ENCODE measurements at regions of chr7 and their contacts with region 1.

Region 1: DNA sequence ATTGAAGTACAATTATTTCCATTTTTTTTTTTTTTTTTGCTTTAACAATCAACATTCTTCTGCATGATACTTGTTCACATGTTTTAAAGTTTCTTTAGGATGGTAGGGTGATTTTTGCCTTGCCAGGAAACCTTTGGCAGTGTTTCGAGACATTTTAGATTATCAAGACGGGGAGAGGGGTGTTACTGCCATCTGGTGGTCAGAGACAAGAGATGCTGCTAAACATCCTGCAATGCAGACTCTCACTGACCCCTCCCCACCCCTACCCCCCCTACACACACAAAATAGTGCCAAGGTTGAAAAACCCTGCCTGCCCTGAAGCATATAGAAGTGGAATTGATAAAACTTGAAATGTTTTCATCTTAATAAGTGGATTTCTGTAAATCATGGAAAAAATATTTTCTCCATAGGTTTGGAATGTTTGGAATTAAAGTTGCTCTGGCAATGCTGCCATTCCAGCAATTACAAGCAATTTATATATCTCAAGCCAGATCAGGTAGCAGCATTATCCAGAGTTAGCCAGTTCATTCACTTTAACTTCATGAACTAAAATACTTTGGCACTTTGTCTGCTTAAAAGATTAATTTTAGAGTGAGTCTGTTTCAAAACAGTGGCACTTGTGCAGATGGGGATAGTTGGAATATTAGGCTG is 62.1 kb downstream of the SDHAF3 start:
- DNase-seq: peak; percentile 29
- H3K4me3 ChIP-seq: no peak overlapping the region
- H3K27ac ChIP-seq: no peak overlapping the region
- H3K27me3 ChIP-seq: no peaks in the 10 kb centered on the region
- CTCF ChIP-seq: peak; percentile 88

Region 2: DNA sequence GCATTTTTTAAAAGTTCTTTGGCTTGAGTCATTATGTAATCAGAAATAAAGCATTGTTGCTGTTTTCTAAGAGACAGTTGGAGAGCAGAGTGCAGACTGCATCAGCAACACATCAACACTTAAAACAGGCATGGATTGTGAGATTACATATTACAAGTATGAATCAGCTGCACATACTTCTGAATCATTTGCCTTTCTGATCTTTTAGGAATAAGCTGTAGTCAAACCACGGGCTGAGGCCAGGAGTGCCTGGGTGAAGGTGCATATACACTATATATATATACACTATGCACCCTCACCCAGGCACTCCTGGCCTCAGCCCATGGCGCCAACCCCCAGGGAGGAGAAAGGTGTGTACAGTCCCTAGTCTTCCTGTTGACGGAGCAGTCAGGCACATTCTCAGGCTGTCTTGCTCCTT is 226.6 kb before region 1 on chr7:
- CTCF ChIA-PET with region 1: no interaction called
- POLR2A ChIA-PET with region 1: no interaction called
- DNase-seq: no peak
- H3K4me3 ChIP-seq: no peak overlapping the region
- H3K27ac ChIP-seq: no peak overlapping the region
- H3K27me3 ChIP-seq: no peaks in the 10 kb centered on the region
- CTCF ChIP-seq: no peak

Region 3: DNA sequence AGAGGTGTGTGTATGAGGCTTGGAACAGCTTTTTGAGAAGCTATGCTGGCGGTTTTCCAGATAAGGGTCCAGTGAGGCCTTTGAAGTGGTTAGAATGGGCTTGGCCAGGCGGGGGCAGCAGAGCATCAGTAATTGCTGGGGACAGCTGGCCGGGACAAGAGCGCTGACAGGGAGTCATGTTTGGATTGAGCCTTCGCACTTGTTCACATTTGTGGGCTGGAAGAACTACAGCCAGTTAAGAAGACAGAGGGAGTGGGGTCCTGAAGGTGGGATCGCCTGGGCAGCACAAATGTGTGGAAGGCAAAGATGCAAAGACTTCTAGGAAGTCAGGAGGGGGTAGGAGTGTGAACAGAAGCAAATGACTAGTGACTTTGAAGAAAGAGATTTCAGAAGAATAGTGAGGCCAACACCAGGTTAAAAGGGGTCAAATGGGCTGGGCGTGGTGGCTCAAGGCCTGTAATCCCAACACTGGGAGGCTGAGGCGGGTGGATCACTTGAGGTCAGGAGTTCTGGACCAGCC is 74.8 kb before region 1 on chr7:
- CTCF ChIA-PET with region 1: interaction called, 18 read pairs
- POLR2A ChIA-PET with region 1: no interaction called
- DNase-seq: peak; percentile 32
- H3K4me3 ChIP-seq: no peak overlapping the region
- H3K27ac ChIP-seq: no peak overlapping the region
- H3K27me3 ChIP-seq: peaks cover 3% of the 10 kb centered on the region
- CTCF ChIP-seq: peak; percentile 77

Region 4: DNA sequence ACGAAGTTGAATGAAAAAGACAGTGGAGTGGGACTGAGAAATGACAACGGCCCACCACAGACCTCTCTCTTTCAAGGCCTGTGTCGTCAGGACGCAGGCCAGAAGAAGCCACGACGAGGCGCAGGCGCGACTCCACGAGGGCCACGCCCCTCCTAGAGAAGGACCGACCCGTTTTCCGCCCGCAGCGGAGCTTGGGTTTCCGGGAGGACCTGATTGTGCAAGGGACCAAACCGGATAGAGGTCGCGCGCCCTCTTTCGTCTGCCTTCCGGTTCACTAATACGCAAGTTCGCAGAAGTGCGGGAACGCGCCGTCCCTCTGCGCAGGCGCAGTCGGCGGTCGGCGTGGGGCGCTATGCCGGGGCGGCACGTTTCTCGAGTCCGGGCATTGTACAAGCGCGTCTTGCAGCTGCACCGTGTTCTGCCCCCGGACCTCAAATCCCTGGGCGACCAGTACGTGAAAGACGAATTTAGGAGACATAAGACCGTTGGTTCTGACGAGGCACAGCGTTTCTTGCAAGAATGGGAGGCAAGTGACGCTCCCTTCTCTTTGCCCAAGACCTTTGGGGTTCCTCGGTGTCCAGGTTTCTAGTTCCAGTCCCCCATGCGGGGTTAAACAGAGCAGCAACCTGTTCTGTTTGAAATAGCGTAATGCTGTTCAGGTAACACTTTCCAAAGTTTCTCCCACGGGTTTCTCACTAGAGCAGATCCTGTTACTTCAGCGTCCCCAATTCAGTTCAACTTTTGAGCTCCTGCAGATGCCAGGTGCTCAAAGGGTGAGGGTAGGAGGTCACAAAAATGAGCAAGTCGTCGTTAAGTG is 62.0 kb before region 1 on chr7 and contains the start of gene SDHAF3:
- CTCF ChIA-PET with region 1: interaction called, 12 read pairs
- POLR2A ChIA-PET with region 1: no interaction called
- DNase-seq: peak; percentile 96
- H3K4me3 ChIP-seq: peak within 1 kb of the TSS; percentile 97
- H3K27ac ChIP-seq: peak within 1 kb of the TSS; percentile 72
- H3K27me3 ChIP-seq: no peaks in the 10 kb centered on the region
- CTCF ChIP-seq: 0 out of 2 replicates have a peak, but pooled peaks have one; percentile 12
- polyA plus RNA-seq, gene SDHAF3: 9.2 and 13.7 TPM in 2 replicates

Region 5: GRCh38 chr7:97145068-97145467 is 34.5 kb before region 1 on chr7:
- CTCF ChIA-PET with region 1: interaction called, 25 read pairs
- POLR2A ChIA-PET with region 1: no interaction called
- DNase-seq: no peak
- H3K4me3 ChIP-seq: no peak overlapping the region
- H3K27ac ChIP-seq: no peak overlapping the region
- H3K27me3 ChIP-seq: no peaks in the 10 kb centered on the region
- CTCF ChIP-seq: peak; percentile 59

Region 6: GRCh38 chr7:97155897-97156418 is 23.6 kb before region 1 on chr7:
- CTCF ChIA-PET with region 1: interaction called, 18 read pairs
- POLR2A ChIA-PET with region 1: no interaction called
- DNase-seq: no peak
- H3K4me3 ChIP-seq: no peak overlapping the region
- H3K27ac ChIP-seq: no peak overlapping the region
- H3K27me3 ChIP-seq: no peaks in the 10 kb centered on the region
- CTCF ChIP-seq: no peak

Region 7: DNA sequence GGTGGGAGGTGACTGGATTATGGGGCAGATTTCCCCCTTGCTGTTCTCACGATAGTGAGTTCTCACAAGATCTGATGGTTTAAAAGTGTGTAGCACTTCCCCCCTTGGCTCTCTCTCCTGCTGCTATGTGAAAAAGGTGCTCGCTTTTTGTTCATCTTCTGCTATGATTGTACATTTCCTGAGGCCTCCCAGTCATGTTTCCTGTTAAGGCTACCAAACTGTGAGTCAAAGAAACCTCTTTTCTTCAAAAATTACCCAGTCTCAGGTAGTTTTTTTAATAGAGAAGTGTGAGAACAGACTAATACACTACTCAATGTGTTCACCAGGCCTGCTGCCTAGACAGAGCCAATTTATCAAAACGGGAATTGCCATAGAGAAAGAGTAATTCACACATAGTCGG is 12.4 kb before region 1 on chr7:
- CTCF ChIA-PET with region 1: interaction called, 31 read pairs
- POLR2A ChIA-PET with region 1: no interaction called
- DNase-seq: no peak
- H3K4me3 ChIP-seq: no peak overlapping the region
- H3K27ac ChIP-seq: no peak overlapping the region
- H3K27me3 ChIP-seq: no peaks in the 10 kb centered on the region
- CTCF ChIP-seq: no peak

Region 8: DNA sequence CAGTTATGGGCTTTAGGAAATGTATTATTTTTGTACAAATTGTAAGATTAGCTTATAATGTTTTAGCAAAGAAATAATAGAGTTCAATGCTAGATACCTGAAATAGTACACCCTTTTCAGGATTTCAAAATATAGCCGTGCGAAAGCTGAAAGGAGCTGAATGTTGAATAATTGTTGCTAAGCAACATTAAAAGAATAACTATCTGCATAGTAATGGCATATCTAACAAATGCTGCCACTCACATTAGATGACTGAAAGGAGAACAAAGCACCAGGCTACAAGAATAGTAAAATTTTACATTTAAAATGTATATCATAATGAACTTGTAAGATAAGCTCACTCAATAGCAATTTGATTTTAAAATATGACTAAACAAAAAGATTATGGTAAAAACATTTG is 20.4 kb after region 1 on chr7:
- CTCF ChIA-PET with region 1: interaction called, 11 read pairs
- POLR2A ChIA-PET with region 1: no interaction called
- DNase-seq: no peak
- H3K4me3 ChIP-seq: no peak overlapping the region
- H3K27ac ChIP-seq: no peak overlapping the region
- H3K27me3 ChIP-seq: no peaks in the 10 kb centered on the region
- CTCF ChIP-seq: no peak

Measured in AG04450 (cell line).